ENCODE measurements at regions of chr19 and their contacts with region 1.

Region 1: GRCh38 chr19:52897144-52897935 is at the start of gene ZNF320:
- DNase-seq: peak; percentile 86 to 97
- H3K4me3 ChIP-seq: peak within 1 kb of the TSS; percentile 84
- H3K27ac ChIP-seq: peak within 1 kb of the TSS; percentile 86
- H3K4me1 ChIP-seq: peaks cover 9% of the 10 kb centered on the region; the same call in 1 of the 2 replicates
- H3K27me3 ChIP-seq: no peaks in the 10 kb centered on the region
- CTCF ChIP-seq: no peak
- total RNA-seq, gene ZNF320: 18.5 and 24.9 TPM in 2 replicates

Region 2: DNA sequence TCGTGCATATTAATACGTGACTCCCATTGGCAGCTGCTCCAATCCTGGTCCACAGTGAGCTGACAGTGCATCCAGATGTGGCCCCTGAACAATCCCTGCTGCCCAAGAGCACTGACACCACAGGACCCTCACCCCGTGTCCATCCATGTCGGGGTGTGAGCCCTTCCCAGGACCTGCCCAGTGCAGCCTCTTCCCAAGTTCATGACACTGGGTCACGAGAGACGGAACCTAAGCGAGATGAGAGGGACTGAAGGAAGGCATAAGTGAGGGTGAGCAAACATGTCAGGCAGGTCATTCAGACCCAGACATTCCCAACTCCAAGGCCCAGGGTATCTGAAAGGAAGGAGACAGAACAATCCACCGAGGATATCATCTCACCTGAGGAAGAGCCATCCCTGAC is 43.5 kb before region 1 on chr19:
- CTCF ChIA-PET with region 1: no interaction called
- POLR2A ChIA-PET with region 1: no interaction called
- intact Hi-C with region 1: loop called (anchors 5 kb)
- DNase-seq: no peak
- H3K4me3 ChIP-seq: no peak overlapping the region
- H3K27ac ChIP-seq: no peak overlapping the region
- H3K4me1 ChIP-seq: no peaks in the 10 kb centered on the region; the same call in 1 of the 2 replicates
- H3K27me3 ChIP-seq: no peaks in the 10 kb centered on the region
- CTCF ChIP-seq: no peak

Region 3: DNA sequence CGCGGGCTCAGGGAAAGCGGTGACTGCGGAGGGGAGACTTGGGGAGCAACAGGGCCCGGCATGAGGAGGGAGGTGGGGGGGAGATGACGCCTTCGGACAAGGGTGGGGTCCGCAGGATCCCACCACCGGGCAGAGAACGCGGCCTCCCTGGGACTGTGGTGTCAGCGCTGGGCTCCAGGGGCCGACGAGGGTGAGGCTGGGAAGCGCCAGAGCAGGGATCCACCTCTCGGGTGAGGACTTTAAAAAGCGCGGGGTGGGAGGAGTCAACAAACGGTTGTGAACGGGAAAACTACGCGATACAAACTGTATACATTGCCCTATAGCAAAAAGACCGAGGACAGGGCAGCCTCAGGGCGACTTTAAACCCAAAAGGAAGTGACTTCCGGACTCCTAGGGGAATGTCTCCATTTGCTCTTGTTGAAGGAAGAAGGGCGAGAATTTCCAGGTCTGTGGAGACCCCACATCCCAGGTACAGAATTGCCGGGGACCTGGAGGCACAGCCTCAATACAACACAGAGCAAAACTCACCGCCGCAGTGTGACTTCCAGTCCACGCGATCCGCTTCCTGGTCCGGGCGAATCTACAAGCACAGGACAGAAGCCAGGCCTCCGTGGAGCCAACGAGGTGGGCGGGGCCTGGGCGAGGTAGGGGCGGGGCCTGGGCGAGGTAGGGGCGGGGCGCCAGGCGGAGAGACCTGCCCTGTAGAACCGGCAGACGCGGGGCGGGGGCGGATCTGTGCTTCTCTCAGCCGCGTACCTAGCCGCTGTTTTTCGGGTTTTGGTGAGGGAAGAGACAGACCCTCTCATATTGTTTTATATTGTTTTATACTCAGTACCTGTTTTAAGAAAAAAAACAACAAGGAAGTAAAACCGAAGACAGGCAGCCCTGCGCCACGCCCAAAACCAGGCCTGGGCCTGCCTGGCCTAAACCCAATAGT is 25.8 kb after region 1 on chr19 and contains the start of gene ZNF888:
- CTCF ChIA-PET with region 1: no interaction called
- POLR2A ChIA-PET with region 1: no interaction called
- intact Hi-C with region 1: loop called (anchors 2 kb)
- DNase-seq: peak; percentile 75 to 91
- H3K4me3 ChIP-seq: peak within 1 kb of the TSS; percentile 96
- H3K27ac ChIP-seq: peak within 1 kb of the TSS; percentile 82
- H3K4me1 ChIP-seq: 0 out of 2 replicates have a peak, but pooled peaks cover 6% of the 10 kb centered on the region
- H3K27me3 ChIP-seq: no peaks in the 10 kb centered on the region
- CTCF ChIP-seq: no peak
- total RNA-seq, gene ZNF888: 10.8 and 14.5 TPM in 2 replicates

Region 4: DNA sequence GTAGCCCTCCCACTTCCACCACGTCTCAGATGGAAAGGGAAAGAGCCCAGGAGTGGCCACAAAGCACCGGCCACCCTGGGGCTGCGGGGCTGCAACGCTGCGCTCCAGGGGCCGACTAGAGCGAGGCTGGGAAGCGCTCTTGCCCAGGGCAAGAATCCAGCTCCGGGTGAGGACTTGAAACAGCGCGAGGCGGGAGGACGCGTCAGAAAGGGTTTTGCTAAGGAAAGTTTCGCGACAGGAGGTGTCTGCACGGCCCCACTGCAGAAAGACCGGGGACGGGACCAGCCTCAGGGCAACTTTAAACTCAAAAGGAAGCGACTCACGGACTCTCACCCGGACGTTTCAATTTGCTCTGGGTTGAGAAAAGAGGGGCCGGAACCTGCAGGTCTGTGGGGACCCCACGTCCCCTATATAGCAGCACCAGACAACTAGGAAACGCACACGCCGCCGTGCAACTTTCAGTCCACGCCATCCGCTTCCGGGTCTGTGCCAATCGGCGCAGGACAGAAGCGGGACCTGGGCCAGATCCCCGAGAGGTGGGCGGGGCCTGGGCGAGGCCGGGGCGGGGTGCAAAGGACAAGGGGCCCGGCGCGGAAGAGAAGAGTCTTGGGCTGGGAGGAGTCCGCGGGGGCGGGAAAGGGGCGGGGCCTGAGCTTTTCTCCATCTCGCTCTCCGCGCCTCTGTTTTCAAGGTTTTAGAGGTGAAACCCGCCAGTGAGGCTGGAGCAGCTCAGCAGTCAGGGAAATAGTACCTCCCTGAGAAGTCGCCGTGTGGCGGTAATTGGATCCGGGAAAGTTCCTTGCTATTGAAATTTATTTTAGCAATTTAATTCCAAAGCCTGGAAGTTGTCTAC is 65.3 kb after region 1 on chr19 and contains the start of gene ZNF816:
- CTCF ChIA-PET with region 1: no interaction called
- POLR2A ChIA-PET with region 1: no interaction called
- intact Hi-C with region 1: loop called (anchors 1 kb)
- DNase-seq: peak; percentile 89 to 99
- H3K4me3 ChIP-seq: peak within 1 kb of the TSS; percentile 83
- H3K27ac ChIP-seq: peak within 1 kb of the TSS; percentile 32
- H3K4me1 ChIP-seq: peaks cover 15% of the 10 kb centered on the region
- H3K27me3 ChIP-seq: no peaks in the 10 kb centered on the region
- CTCF ChIP-seq: no peak
- total RNA-seq, gene ZNF816: 11.8 and 13.8 TPM in 2 replicates

Region 5: GRCh38 chr19:52981329-52981728 is 84.0 kb after region 1 on chr19:
- CTCF ChIA-PET with region 1: no interaction called
- POLR2A ChIA-PET with region 1: no interaction called
- intact Hi-C with region 1: no loop called
- DNase-seq: no peak
- H3K4me3 ChIP-seq: no peak overlapping the region
- H3K27ac ChIP-seq: no peak overlapping the region
- H3K4me1 ChIP-seq: no peaks in the 10 kb centered on the region
- H3K27me3 ChIP-seq: no peaks in the 10 kb centered on the region
- CTCF ChIP-seq: no peak

Region 6: DNA sequence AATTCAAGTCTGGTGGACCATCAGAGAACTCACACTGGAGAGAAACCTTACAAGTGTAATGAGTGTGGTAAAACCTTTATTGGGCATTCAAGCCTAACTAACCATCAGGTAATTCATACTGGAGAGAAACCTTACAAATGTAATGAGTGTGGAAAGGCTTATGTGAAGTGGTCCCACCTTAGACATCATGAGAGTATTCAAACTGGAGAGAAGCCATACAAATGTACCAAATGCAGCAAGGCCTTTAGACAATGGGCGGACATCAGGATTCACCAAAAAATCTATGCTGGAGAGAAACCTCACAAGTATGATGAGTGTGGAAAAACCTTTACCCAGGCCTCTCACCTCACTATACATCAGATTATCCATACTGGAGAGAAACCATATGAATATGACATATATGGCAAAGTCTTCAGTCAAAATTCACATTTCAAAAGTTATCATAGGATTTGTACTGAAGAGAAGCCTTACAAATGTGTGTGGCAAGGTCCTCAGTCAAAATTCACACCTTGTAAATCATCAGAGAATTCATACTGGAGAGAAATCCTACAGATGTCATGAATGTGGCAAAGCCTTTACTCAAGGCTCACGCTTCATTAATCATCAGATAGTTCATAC is 315.5 kb after region 1 on chr19:
- CTCF ChIA-PET with region 1: no interaction called
- POLR2A ChIA-PET with region 1: no interaction called
- intact Hi-C with region 1: no loop called
- DNase-seq: no peak
- H3K4me3 ChIP-seq: no peak overlapping the region
- H3K27ac ChIP-seq: no peak overlapping the region
- H3K4me1 ChIP-seq: no peaks in the 10 kb centered on the region
- H3K27me3 ChIP-seq: no peaks in the 10 kb centered on the region
- CTCF ChIP-seq: no peak